Activated T-helper 1 cell treated with anti-CD3 and anti-CD28 coated beads, Interleukin-12 subunit alpha, Interleukin-12 subunit beta, Interleukin-2, Interleukin-4 antibody, amounts not matched to agents 30 ng/mL and 10 ng/mL and 1 ng/mL, durations not matched to agents 14 hours and 24 hours and 36 hours (primary cell): ENCODE measurements at regions of chr3 and their contacts with region 1.

Region 1: GRCh38 chr3:71461749-71462465 is 121.6 kb downstream of the FOXP1 start:
- DNase-seq: no peak
- H3K4me3 Mint-ChIP-seq: no peak overlapping the region
- H3K27ac Mint-ChIP-seq: no peak overlapping the region
- H3K4me1 Mint-ChIP-seq: peaks cover 15% of the 10 kb centered on the region
- H3K27me3 Mint-ChIP-seq: peaks cover 18% of the 10 kb centered on the region

Region 2: DNA sequence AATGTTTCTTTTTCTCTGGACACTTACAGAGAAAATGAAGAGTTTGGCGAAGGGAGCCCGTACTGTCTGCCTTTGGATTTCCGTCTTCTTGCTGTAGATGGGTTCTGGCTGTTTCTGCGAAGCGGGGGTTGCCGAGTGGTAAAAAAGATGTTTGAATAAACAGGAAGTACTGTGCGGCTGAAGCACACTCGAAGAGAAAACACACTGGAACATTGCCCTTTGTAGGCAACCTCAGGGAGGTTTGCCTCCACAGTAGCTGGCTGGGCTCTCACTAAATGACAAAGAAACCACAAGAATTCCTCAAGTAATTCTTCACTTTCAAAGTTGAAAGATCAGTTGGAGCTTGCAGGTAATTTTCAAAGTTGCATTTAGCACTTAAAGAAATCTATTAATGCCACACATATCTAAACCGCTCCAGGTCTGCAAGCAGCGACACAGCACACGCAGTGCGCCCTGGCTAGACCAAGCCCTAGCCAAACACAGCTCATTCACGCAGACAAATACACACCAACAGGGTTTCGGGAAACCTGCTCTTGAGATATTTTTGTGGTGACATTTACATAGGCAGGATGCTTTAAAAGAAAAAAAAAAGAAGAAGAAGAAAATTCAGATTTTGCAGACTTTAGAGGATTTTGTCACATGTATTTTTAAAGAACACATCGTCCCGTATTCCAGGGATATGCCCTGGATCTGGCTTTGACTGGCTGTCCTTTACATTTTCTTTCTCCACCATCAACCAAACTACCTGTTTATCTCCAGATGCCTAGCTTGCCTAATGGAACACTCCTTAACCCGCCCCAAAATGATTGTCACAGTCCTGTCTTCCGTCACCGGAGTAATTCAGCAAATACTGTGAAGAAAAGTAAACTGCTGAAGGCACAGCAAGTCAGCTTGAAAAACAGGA is 331.2 kb before region 1 on chr3:
- intact Hi-C with region 1: no loop called
- DNase-seq: peak; percentile 67
- H3K4me3 Mint-ChIP-seq: peak overlapping the region; percentile 89
- H3K27ac Mint-ChIP-seq: peak overlapping the region; percentile 93
- H3K4me1 Mint-ChIP-seq: peaks cover 65% of the 10 kb centered on the region
- H3K27me3 Mint-ChIP-seq: no peaks in the 10 kb centered on the region

Region 3: GRCh38 chr3:71478568-71478967 is 16.7 kb after region 1 on chr3:
- intact Hi-C with region 1: loop called (anchors 2 kb)
- DNase-seq: no peak
- H3K4me3 Mint-ChIP-seq: no peak overlapping the region
- H3K27ac Mint-ChIP-seq: peak overlapping the region; percentile 58
- H3K4me1 Mint-ChIP-seq: peaks cover 23% of the 10 kb centered on the region
- H3K27me3 Mint-ChIP-seq: peaks cover 4% of the 10 kb centered on the region

Region 4: GRCh38 chr3:71649761-71650160 is 187.9 kb after region 1 on chr3:
- intact Hi-C with region 1: no loop called
- DNase-seq: no peak
- H3K4me3 Mint-ChIP-seq: no peak overlapping the region
- H3K27ac Mint-ChIP-seq: no peak overlapping the region
- H3K4me1 Mint-ChIP-seq: no peaks in the 10 kb centered on the region
- H3K27me3 Mint-ChIP-seq: no peaks in the 10 kb centered on the region